ENCODE measurements at regions of chr4 and their contacts with region 1.

Region 1: DNA sequence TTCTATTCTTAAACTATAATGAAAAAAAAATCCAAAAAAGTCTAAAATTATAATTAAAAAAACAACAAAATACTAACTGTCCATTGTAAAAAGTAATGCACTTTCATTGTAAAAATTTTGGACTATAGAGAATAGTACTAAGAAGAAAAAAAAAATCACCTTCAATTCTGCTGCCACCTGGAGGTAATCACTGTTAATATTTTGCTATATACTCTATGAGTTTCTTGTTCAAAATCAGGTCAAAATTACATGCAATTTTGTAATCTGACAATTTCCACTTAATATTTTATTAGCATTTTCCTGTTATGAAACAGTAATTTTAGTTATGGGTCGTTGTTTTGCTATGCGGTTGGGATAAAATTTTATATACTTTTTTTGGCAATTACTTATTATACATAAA is 62.0 kb downstream of the HTT start:
- DNase-seq: peak; percentile 6
- H3K4me3 Mint-ChIP-seq: no peak overlapping the region
- H3K27ac Mint-ChIP-seq: no peak overlapping the region
- H3K4me1 Mint-ChIP-seq: no peaks in the 10 kb centered on the region
- H3K27me3 Mint-ChIP-seq: no peaks in the 10 kb centered on the region
- CTCF ChIP-seq: peak; percentile 37

Region 2: GRCh38 chr4:2995546-2996265 is 140.7 kb before region 1 on chr4:
- CTCF ChIA-PET with region 1: interaction called, 11 read pairs
- POLR2A ChIA-PET with region 1: no interaction called
- intact Hi-C with region 1: no loop called
- DNase-seq: no peak
- H3K4me3 Mint-ChIP-seq: no peak overlapping the region
- H3K27ac Mint-ChIP-seq: no peak overlapping the region
- H3K4me1 Mint-ChIP-seq: no peaks in the 10 kb centered on the region
- H3K27me3 Mint-ChIP-seq: no peaks in the 10 kb centered on the region
- CTCF ChIP-seq: no peak

Region 3: DNA sequence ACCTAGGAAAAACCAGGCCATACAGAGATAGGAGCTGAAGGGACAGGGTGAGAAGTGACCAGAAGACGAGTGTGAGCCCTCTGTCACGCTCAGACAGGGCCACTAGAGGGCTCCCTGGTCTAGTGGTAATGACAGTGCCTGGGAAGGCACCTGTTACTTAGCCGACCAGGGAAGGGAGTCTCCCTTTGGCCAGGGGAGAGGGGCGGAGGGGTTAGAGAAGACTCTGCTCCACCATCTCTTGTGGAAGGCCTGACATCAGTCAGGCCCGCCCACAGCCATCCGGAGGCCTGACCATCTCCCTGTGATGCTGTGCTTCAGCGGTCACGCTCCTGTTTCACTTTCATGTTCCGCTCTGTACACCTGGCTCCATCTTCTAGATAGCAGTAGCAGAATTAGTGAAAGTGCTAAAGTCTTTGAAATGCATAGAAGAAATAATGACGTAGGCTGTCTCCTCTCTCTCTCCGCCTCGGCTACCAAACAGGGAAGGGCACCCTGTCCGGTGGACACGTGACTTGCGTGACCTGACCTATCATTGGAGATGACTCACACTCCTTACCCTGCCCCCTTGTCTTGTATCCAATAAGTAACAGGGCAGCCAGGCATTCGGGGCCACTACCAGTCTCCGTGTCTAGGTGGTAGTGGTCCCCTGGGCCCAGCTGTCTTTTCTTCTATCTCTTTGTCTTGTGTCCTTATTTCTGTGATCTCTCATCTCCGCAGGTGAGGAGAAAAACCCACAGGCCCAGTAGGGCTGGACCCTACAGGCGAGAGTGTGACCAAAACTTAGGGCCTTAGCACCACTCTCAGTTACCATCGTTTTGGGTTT is 88.8 kb before region 1 on chr4:
- CTCF ChIA-PET with region 1: interaction called, 4 read pairs
- POLR2A ChIA-PET with region 1: interaction called, 3 read pairs
- intact Hi-C with region 1: loop called (anchors 1 kb)
- DNase-seq: peak; percentile 73
- H3K4me3 Mint-ChIP-seq: peak overlapping the region; percentile 32
- H3K27ac Mint-ChIP-seq: no peak overlapping the region
- H3K4me1 Mint-ChIP-seq: peaks cover 8% of the 10 kb centered on the region
- H3K27me3 Mint-ChIP-seq: peaks cover 35% of the 10 kb centered on the region
- CTCF ChIP-seq: peak; percentile 80

Region 4: GRCh38 chr4:3106339-3107186 is 29.9 kb before region 1 on chr4:
- CTCF ChIA-PET with region 1: interaction called, 24 read pairs
- POLR2A ChIA-PET with region 1: interaction called, 4 read pairs
- intact Hi-C with region 1: loop called (anchors 1 kb)
- DNase-seq: peak; percentile 91
- H3K4me3 Mint-ChIP-seq: no peak overlapping the region
- H3K27ac Mint-ChIP-seq: peak overlapping the region; percentile 57
- H3K4me1 Mint-ChIP-seq: peaks cover 6% of the 10 kb centered on the region
- H3K27me3 Mint-ChIP-seq: no peaks in the 10 kb centered on the region
- CTCF ChIP-seq: peak; percentile 92

Region 5: GRCh38 chr4:3148926-3149325 is 12.5 kb after region 1 on chr4:
- CTCF ChIA-PET with region 1: interaction called, 11 read pairs
- POLR2A ChIA-PET with region 1: no interaction called
- intact Hi-C with region 1: no loop called
- DNase-seq: no peak
- H3K4me3 Mint-ChIP-seq: no peak overlapping the region
- H3K27ac Mint-ChIP-seq: no peak overlapping the region
- H3K4me1 Mint-ChIP-seq: no peaks in the 10 kb centered on the region
- H3K27me3 Mint-ChIP-seq: no peaks in the 10 kb centered on the region
- CTCF ChIP-seq: no peak

Measured in MCF 10A (cell line).